PC-9 (cell line): ENCODE measurements at regions of chr3 and their contacts with region 1.

Region 1: GRCh38 chr3:145501234-145501633 is 659.8 kb downstream of the PLOD2 start:
- DNase-seq: no peak
- H3K4me3 ChIP-seq: no peak overlapping the region
- H3K27ac ChIP-seq: no peak overlapping the region
- H3K4me1 ChIP-seq: no peaks in the 10 kb centered on the region
- H3K27me3 ChIP-seq: no peaks in the 10 kb centered on the region
- CTCF ChIP-seq: no peak

Region 2: GRCh38 chr3:143914257-143914656 is 1587.0 kb before region 1 on chr3:
- CTCF ChIA-PET with region 1: no interaction called
- POLR2A ChIA-PET with region 1: no interaction called
- intact Hi-C with region 1: no loop called
- DNase-seq: no peak
- H3K4me3 ChIP-seq: no peak overlapping the region
- H3K27ac ChIP-seq: no peak overlapping the region
- H3K4me1 ChIP-seq: no peaks in the 10 kb centered on the region
- H3K27me3 ChIP-seq: no peaks in the 10 kb centered on the region
- CTCF ChIP-seq: no peak

Region 3: DNA sequence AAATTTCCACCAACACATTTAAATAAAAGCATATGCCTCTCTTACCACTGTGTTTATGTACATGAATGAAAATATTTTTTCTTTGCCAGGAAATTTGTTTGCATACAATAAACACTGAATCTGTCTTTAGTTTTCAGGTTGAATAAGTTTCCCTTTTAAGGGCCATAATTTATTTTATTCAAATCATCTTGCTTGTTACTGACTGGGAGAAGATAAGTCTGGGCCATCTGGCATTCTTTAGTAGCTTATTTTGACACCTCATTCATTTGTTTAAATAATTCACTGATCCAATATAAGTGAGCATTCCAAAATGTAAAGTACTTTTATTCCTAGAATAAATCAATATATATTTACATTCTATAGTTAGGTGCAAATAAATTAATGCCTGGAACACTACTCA is 341.6 kb before region 1 on chr3:
- CTCF ChIA-PET with region 1: no interaction called
- POLR2A ChIA-PET with region 1: no interaction called
- intact Hi-C with region 1: no loop called
- DNase-seq: no peak
- H3K4me3 ChIP-seq: no peak overlapping the region
- H3K27ac ChIP-seq: no peak overlapping the region
- H3K4me1 ChIP-seq: no peaks in the 10 kb centered on the region
- H3K27me3 ChIP-seq: no peaks in the 10 kb centered on the region
- CTCF ChIP-seq: no peak

Region 4: GRCh38 chr3:145522893-145523651 is 21.8 kb after region 1 on chr3:
- CTCF ChIA-PET with region 1: no interaction called
- POLR2A ChIA-PET with region 1: interaction called, 10 read pairs
- intact Hi-C with region 1: no loop called
- DNase-seq: no peak
- H3K4me3 ChIP-seq: no peak overlapping the region
- H3K27ac ChIP-seq: no peak overlapping the region
- H3K4me1 ChIP-seq: no peaks in the 10 kb centered on the region
- H3K27me3 ChIP-seq: no peaks in the 10 kb centered on the region
- CTCF ChIP-seq: no peak

Region 5: DNA sequence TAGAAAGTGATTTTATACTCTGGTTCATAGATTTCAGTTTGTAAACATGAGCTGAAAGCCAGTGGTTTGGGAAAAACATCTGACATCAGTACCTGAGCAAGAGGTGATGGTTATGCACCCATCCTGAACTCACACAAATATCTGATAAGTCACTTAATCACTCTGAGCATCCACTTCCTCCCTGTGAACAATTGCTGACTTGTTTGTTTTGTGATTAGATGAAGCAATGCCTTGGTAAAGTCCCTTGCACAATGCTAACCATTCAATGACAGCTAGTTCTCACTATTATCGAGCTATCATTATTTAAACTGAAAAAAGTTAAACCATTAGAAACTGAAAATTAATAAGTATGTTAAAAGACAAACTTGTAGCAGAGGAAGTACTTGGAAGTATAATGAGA is 356.7 kb after region 1 on chr3:
- CTCF ChIA-PET with region 1: no interaction called
- POLR2A ChIA-PET with region 1: no interaction called
- intact Hi-C with region 1: no loop called
- DNase-seq: peak in 1 of 2 experiments; percentile 49
- H3K4me3 ChIP-seq: no peak overlapping the region
- H3K27ac ChIP-seq: no peak overlapping the region
- H3K4me1 ChIP-seq: no peaks in the 10 kb centered on the region
- H3K27me3 ChIP-seq: no peaks in the 10 kb centered on the region
- CTCF ChIP-seq: no peak